ENCODE measurements at regions of chr1 and their contacts with region 1.

Region 1: GRCh38 chr1:27603681-27604578 is at the start of gene AHDC1:
- DNase-seq: peak; percentile 94 to 96
- ATAC-seq: peak; percentile 68 to 75 (median 70)
- H3K4me3 ChIP-seq: peak within 1 kb of the TSS; percentile 99
- H3K27ac ChIP-seq: peak within 1 kb of the TSS; percentile 99
- H3K4me1 ChIP-seq: peaks cover 23% of the 10 kb centered on the region
- H3K27me3 ChIP-seq: no peaks in the 10 kb centered on the region
- CTCF ChIP-seq: no peak
- total RNA-seq, gene AHDC1: 35.9 to 65.2 (median 59.0) TPM

Region 2: GRCh38 chr1:27392096-27392777 is 211.7 kb before region 1 on chr1 and contains the start of gene GPR3:
- intact Hi-C with region 1: loop called (anchors 2 kb)
- DNase-seq: peak; percentile 93 to 95
- ATAC-seq: peak; percentile 87 to 93 (median 91)
- H3K4me3 ChIP-seq: peak within 1 kb of the TSS; percentile 67
- H3K27ac ChIP-seq: no peak within 1 kb of the TSS
- H3K4me1 ChIP-seq: peaks cover 8% of the 10 kb centered on the region
- H3K27me3 ChIP-seq: no peaks in the 10 kb centered on the region
- CTCF ChIP-seq: peak; percentile 38
- total RNA-seq, gene GPR3: 0.42 to 1.3 TPM in 2 of 4 donors, not detected in the others

Region 3: DNA sequence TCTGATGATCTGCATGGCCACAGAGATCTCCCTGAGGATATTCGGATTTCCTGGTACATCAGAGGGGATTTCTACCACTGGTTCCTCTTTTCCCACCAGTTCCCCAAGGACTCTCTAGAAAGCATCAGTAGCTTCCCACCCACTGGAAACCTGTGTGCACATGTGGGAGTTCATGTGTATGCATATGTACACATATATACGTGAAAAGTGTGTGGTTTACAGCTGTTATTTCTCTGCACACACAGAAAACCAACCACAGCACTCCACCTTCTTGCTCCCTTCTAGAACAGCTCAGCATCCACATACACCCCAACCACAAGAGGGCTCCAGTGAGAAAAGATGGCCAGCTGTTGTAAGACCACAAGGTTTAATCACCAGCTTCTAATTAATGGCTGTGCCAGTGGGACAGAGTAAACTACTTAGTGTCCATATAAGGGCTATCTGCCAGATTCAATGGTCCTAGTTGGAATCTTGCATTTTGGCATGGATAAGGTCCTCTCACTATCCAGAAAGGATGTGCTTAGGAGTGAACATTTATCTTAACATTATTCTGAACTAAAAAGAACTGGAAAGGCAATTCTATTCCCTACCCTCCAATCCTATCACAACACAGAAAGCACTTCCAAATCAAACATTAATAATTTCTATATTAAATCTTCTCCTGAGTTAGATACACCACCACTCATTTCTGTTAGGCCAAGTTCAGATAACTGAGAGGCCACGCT is 187.4 kb before region 1 on chr1:
- intact Hi-C with region 1: loop called (anchors 2 to 5 kb)
- DNase-seq: no peak
- ATAC-seq: peak; percentile 53 to 63 (median 56)
- H3K4me3 ChIP-seq: no peak overlapping the region
- H3K27ac ChIP-seq: peak overlapping the region; percentile 88
- H3K4me1 ChIP-seq: peaks cover 52% of the 10 kb centered on the region
- H3K27me3 ChIP-seq: no peaks in the 10 kb centered on the region
- CTCF ChIP-seq: peak; percentile 69

Region 4: GRCh38 chr1:27525296-27526272 is 78.3 kb before region 1 on chr1:
- intact Hi-C with region 1: loop called in 1 of 2 experiments (anchors 2 kb)
- DNase-seq: peak; percentile 72 to 83
- ATAC-seq: peak; percentile 18 to 40 (median 26)
- H3K4me3 ChIP-seq: peak overlapping the region; percentile 71
- H3K27ac ChIP-seq: peak overlapping the region; percentile 94
- H3K4me1 ChIP-seq: peaks cover 80% of the 10 kb centered on the region
- H3K27me3 ChIP-seq: no peaks in the 10 kb centered on the region
- CTCF ChIP-seq: no peak

Region 5: DNA sequence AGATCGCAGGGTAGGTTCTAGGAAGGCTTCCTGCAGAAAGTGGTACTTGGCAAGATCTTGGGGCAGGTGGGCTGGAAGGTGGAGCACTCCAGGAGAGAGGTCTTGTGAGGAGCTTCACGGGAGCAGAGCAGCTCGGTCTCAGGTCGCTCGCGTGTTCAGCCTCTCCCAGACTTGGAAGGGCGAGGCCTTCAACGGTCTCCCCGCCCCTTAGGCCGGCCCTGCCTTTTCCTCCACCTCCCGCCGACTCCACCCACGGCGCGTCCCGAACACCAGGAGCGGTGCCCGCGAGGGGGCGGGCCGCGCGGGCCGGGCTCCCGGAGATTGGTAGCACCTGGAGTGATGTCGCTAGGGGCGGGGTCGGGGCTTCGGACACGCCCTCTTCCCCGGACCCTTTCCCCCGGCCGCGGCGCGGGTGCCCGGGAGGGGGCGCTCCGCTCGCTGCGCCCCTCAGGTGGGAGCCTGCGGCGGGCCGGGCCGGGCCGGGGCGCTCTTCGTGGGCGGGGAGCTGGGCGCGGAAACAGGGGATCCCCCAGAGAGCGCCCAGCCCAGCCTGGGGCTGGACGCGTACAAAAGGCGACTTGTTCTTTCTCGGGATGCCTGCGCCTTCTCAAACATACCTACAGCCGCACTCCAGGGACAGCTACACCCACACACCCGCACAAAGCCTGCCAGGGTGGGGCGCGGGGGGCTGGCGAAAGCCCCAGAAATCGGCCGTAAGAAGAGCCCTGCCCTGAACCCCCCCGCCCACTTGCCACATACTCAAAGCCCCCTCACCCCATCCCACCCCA is 35.4 kb before region 1 on chr1:
- intact Hi-C with region 1: loop called in 1 of 2 experiments (anchors 2 kb)
- DNase-seq: peak; percentile 96 to 97
- ATAC-seq: peak; percentile 68 to 78 (median 72)
- H3K4me3 ChIP-seq: peak overlapping the region; percentile 55
- H3K27ac ChIP-seq: peak overlapping the region; percentile 94
- H3K4me1 ChIP-seq: peaks cover 96% of the 10 kb centered on the region
- H3K27me3 ChIP-seq: no peaks in the 10 kb centered on the region
- CTCF ChIP-seq: peak; percentile 59